CD8-positive, alpha-beta memory T cell (primary cell): ENCODE measurements at regions of chr5 and their contacts with region 1.

Region 1: GRCh38 chr5:157431544-157432200 is 28.3 kb upstream of the NIPAL4 start:
- DNase-seq: peak in 3 of 5 donors; percentile 5 to 37 (median 21)
- H3K4me3 ChIP-seq: no peak overlapping the region
- H3K4me3 Mint-ChIP-seq: no peak overlapping the region
- H3K27ac ChIP-seq: no peak overlapping the region
- H3K27ac Mint-ChIP-seq: peak overlapping the region in 2 of 8 donors; percentile 15 to 47
- H3K4me1 ChIP-seq: no peaks in the 10 kb centered on the region
- H3K4me1 Mint-ChIP-seq: peaks cover 5 to 8% (median 7%) of the 10 kb centered on the region in 3 donors
- H3K27me3 ChIP-seq: no peaks in the 10 kb centered on the region
- H3K27me3 Mint-ChIP-seq: peaks cover 5 to 6% of the 10 kb centered on the region in 2 donors

Region 2: DNA sequence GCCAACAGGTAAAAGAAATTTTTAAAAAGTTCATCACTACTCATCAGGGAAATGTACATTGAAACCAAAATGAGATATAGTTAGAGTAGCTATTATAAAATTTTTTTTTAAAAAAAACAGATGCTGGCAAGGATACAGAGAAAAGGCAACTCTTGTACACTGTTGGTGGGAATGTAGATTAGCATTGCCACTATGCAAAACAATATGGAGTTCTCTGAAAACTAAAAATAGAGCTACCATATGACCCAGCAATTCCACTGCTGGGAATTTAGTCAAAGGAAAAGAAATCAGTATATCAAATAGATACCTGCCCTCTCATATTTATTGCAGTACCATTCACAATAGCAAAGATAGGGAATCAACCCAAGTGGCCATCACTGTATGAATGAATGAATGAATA is 15.8 kb before region 1 on chr5:
- CTCF ChIA-PET with region 1: no interaction called
- POLR2A ChIA-PET with region 1: no interaction called
- DNase-seq: no peak
- H3K4me3 ChIP-seq: no peak overlapping the region
- H3K4me3 Mint-ChIP-seq: no peak overlapping the region
- H3K27ac ChIP-seq: no peak overlapping the region
- H3K27ac Mint-ChIP-seq: no peak overlapping the region
- H3K4me1 ChIP-seq: no peaks in the 10 kb centered on the region
- H3K4me1 Mint-ChIP-seq: no peaks in the 10 kb centered on the region
- H3K27me3 ChIP-seq: no peaks in the 10 kb centered on the region
- H3K27me3 Mint-ChIP-seq: peaks cover 7 to 14% of the 10 kb centered on the region in 2 donors

Region 3: GRCh38 chr5:157718519-157718918 is 286.8 kb after region 1 on chr5:
- CTCF ChIA-PET with region 1: interaction called, 26 read pairs
- POLR2A ChIA-PET with region 1: no interaction called
- DNase-seq: peak in 2 of 5 donors; percentile 8 to 18
- H3K4me3 ChIP-seq: no peak overlapping the region
- H3K4me3 Mint-ChIP-seq: no peak overlapping the region
- H3K27ac ChIP-seq: no peak overlapping the region
- H3K27ac Mint-ChIP-seq: peak overlapping the region in 2 of 8 donors; percentile 55 to 72
- H3K4me1 ChIP-seq: peaks cover 12% of the 10 kb centered on the region
- H3K4me1 Mint-ChIP-seq: peaks cover 12 to 21% (median 16%) of the 10 kb centered on the region in 3 donors
- H3K27me3 ChIP-seq: no peaks in the 10 kb centered on the region
- H3K27me3 Mint-ChIP-seq: no peaks in the 10 kb centered on the region